Dendritic cell treated with granulocyte-macrophage colony-stimulating factor and Interleukin-4, amounts not matched to agents 40 ng/mL and 50 ng/mL, for 4 days (primary cell): ENCODE measurements at regions of chr12 and their contacts with region 1.

Region 1: DNA sequence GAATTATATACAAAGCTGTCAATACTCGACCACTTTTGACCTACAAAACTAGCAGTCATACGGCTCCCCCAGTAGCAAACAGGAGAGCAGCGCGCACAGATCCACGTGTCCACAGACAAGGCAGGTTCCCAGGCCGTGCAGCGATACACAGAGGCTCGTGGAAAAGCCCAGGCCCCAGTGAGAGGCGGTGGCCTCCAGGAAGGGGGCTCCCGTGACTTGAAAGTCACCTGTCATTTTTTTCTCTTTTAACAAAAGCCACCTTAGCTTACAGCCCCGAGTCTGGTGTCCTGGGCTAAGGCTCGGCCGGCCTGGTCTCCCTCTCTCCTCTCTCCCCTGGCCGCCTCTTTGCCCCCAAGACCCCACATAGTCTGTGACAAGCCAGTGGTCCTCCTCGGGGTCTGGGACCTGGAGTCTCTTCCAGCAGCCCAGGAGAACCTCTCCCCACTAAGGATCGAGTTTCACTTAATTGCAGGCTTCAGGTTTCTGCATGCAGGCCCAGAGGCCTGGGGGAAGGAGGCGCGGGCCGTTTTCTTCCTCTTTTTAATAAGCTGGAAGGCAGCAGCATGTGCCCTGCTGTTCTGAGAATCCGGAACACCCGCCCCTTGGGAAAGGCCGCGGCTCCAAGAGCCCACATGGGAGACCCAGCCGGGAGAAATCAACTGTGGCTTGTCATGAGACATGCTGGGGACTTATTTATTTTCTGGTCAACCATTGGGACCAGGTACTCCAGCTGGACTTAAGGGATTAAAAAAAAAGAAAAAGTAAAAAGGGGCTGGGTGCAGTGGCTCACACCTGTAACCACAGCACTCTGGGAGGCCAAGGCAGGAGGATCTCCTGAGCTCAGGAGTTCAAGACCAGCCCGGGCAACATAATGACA is 15.9 kb downstream of the NCOR2 start:
- H3K4me3 Mint-ChIP-seq: peak overlapping the region; percentile 78
- H3K27ac Mint-ChIP-seq: peak overlapping the region; percentile 98
- H3K4me1 Mint-ChIP-seq: peaks cover 100% of the 10 kb centered on the region
- H3K27me3 Mint-ChIP-seq: no peaks in the 10 kb centered on the region

Region 2: DNA sequence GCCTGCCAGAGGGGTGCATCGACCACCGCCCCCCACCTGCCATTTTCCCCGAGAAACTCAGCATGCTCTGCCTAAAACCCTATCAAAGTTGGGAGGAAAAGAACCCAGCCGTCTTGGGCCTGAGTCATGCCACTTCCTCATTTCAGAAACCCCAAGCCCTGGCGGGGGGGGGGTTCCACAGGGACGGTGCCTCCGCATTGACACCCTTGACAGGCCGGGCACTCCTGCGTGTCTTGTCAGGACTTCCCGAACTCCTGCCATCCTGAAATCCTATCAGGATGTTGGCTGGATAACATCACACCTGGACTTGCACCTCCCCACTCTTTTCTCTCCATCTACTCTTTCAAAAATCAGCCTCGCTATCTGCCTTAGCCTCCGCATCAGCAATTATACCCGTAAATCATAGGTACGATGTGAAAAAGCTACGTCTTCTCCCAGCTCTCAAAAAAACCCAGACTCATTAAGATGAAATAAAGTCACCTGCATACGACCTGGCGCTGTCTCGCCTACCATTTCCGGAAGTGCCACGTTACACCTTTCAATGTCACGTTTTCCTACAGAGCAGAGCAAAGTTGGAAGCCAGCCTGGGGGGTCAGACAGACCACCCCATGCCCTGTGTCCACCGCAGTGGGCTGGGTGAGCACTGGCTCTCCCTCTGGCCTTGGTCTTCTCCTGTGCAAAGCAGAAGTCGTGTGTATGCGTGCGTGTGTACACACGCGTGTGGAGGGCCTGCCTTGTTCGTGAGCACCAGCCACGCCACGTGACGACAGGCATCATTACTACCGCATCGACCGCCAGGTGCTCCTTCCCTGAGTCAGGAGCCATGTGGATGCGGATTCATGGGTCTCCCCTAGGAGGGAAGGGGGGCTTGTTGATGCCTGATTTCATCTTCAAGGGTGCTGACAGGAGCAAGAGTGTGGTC is 159.9 kb before region 1 on chr12:
- intact Hi-C with region 1: loop called (anchors 5 kb)
- H3K4me3 Mint-ChIP-seq: peak overlapping the region; percentile 99
- H3K27ac Mint-ChIP-seq: peak overlapping the region; percentile 94
- H3K4me1 Mint-ChIP-seq: peaks cover 94% of the 10 kb centered on the region
- H3K27me3 Mint-ChIP-seq: no peaks in the 10 kb centered on the region

Region 3: DNA sequence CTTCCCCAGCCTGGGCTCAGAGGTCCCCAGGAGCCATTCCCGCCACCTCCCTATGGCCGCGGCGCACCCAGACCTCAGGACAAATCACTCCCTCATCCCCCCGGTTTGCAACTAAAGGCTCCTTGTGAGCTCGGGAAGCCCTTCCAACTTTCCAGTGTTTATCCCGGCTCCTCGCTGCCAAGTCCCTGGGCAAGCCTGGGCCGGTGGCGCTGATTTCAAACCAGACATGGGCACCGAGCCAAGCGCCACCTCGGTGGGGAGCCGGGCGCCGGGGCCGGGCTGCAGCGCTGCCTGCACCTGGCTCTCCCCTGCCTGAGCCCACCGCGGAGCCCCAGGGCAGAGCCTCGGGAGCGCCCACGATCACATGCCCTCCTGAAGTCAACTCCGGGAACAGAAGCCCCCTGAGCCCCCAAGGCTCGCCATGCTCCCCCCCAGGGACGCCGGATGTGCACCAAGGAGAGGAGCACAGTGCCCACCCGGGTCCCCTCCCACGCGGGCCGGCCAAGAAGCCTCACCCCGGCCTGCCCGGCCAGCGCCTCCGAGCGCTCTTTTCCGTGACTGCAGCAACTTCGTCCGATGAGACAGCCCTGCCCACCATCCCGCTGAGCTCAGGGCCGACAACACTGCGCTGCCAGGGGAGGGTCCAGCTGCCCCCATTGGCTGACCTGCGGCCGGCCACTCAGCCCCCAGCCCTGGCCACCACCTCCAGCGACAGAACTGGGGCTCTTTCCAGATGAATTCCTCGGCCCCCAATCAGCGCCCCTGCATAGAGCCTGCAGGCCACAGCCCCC is 34.1 kb before region 1 on chr12:
- intact Hi-C with region 1: no loop called
- H3K4me3 Mint-ChIP-seq: peak overlapping the region; percentile 49
- H3K27ac Mint-ChIP-seq: peak overlapping the region; percentile 84
- H3K4me1 Mint-ChIP-seq: peaks cover 77% of the 10 kb centered on the region
- H3K27me3 Mint-ChIP-seq: peaks cover 3% of the 10 kb centered on the region

Region 4: GRCh38 chr12:124680863-124681778 is 129.6 kb after region 1 on chr12:
- intact Hi-C with region 1: loop called (anchors 1 kb)
- H3K4me3 Mint-ChIP-seq: peak overlapping the region; percentile 20
- H3K27ac Mint-ChIP-seq: peak overlapping the region; percentile 82
- H3K4me1 Mint-ChIP-seq: peaks cover 81% of the 10 kb centered on the region
- H3K27me3 Mint-ChIP-seq: peaks cover 10% of the 10 kb centered on the region